OCI-LY7 (cell line): ENCODE measurements at regions of chr3 and their contacts with region 1.

Region 1: DNA sequence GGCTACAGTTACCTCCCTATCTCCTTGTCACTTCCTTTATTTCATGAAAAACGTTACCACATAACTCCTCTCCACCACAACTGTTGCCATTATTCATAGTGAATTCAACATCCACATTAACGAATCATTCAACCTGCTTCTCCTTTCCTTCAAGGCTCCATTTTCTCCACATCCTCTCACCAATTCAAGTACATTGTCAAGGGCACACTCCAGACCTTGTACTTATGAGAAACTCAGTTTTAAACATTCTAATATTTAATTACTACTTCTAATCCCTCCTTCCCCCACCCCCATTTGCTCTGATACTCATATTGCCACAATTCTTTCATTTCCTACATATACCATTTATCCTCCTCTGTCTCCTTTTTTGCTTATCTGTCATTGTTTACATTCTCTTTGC is 871.2 kb downstream of the TUSC7 start:
- DNase-seq: no peak
- H3K4me3 ChIP-seq: no peak overlapping the region
- H3K27ac ChIP-seq: no peak overlapping the region
- H3K4me1 ChIP-seq: no peaks in the 10 kb centered on the region
- CTCF ChIP-seq: no peak

Region 2: GRCh38 chr3:117355566-117355965 is 225.2 kb before region 1 on chr3:
- CTCF ChIA-PET with region 1: no interaction called
- POLR2A ChIA-PET with region 1: no interaction called
- intact Hi-C with region 1: no loop called
- DNase-seq: no peak
- H3K4me3 ChIP-seq: no peak overlapping the region
- H3K27ac ChIP-seq: no peak overlapping the region
- H3K4me1 ChIP-seq: no peaks in the 10 kb centered on the region
- CTCF ChIP-seq: no peak

Region 3: DNA sequence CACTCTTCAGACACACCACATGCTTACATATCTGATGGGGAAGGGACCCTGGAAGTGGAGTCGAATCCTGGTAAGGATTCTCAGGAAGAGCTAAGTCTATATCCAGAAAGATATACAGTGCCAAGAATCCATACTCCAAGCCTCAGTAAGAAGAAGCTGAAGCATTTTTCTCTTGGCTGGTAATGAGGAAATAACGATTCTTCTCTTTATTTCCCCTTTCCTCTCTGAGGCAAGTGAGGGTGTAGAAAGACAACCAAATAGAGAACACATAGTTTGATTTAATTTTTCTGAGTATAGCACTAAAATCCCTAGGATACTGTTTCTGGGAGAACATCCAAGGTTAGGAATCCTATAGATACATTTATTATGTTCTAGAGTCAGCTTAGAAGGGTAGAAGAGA is 13.9 kb before region 1 on chr3:
- CTCF ChIA-PET with region 1: interaction called, 3 read pairs
- POLR2A ChIA-PET with region 1: interaction called, 10 read pairs
- intact Hi-C with region 1: no loop called
- DNase-seq: no peak
- H3K4me3 ChIP-seq: no peak overlapping the region
- H3K27ac ChIP-seq: no peak overlapping the region
- H3K4me1 ChIP-seq: no peaks in the 10 kb centered on the region
- CTCF ChIP-seq: no peak